ENCODE measurements at regions of chr11 and their contacts with region 1.

Region 1: GRCh38 chr11:44029977-44030911 is 17.5 kb upstream of the ACCSL start:
- DNase-seq: peak; percentile 78
- H3K4me3 ChIP-seq: no peak overlapping the region
- H3K27ac ChIP-seq: peak overlapping the region; percentile 51 to 64 (median 60)
- H3K4me1 ChIP-seq: peaks cover 0 to 27% (median 22%) of the 10 kb centered on the region in 4 donors
- H3K27me3 ChIP-seq: no peaks in the 10 kb centered on the region
- CTCF ChIP-seq: no peak
- EP300 ChIP-seq: peak in 1 of 4 donors; percentile 33
- POLR2A ChIP-seq: no peak

Region 2: DNA sequence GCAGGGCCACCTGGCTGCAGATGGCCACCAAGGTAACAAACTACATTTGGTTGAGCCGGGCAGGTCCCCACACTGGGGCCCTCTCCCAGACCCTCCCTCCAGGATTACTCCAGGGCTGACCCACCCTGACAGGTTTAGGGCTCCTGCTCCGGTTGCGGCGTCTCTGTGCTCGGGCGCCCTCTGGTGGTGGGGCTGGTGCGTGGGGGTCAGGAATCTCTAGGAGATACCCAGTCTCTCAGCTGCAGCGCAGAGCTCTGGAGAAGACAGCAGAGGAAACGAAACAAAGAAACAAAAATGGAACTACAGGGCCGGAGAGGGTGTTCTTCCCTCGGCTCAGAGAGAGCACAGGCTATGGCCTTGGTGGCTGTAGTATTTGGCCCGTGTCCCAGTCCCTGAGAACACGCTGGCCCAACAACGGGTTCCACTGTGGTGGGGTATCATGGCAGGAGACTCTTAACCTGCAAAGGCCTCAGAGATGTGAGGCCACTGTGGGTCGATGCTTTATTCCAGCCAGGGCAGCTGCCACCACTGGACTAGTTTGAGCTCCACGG is 85.4 kb before region 1 on chr11:
- intact Hi-C with region 1: loop called (anchors 5 kb)
- DNase-seq: peak; percentile 86
- H3K4me3 ChIP-seq: peak overlapping the region; percentile 62 to 73 (median 70)
- H3K27ac ChIP-seq: peak overlapping the region; percentile 85 to 91 (median 86)
- H3K4me1 ChIP-seq: peaks cover 0 to 35% (median 25%) of the 10 kb centered on the region in 4 donors
- H3K27me3 ChIP-seq: peaks cover 0 to 63% (median 27%) of the 10 kb centered on the region in 3 donors
- CTCF ChIP-seq: peak in 3 of 4 experiments; percentile 41 to 62 (median 53)
- EP300 ChIP-seq: no peak
- POLR2A ChIP-seq: no peak

Region 3: GRCh38 chr11:43987384-43988039 is 42.7 kb before region 1 on chr11:
- intact Hi-C with region 1: loop called (anchors 5 kb)
- DNase-seq: peak; percentile 96
- H3K4me3 ChIP-seq: peak overlapping the region in 1 of 4 donors; percentile 12
- H3K27ac ChIP-seq: peak overlapping the region; percentile 59 to 74 (median 68)
- H3K4me1 ChIP-seq: peaks cover 0 to 35% (median 31%) of the 10 kb centered on the region in 4 donors
- H3K27me3 ChIP-seq: no peaks in the 10 kb centered on the region
- CTCF ChIP-seq: no peak
- EP300 ChIP-seq: no peak
- POLR2A ChIP-seq: no peak

Region 4: GRCh38 chr11:44192462-44193100 is 162.3 kb after region 1 on chr11:
- intact Hi-C with region 1: no loop called
- DNase-seq: no peak
- H3K4me3 ChIP-seq: no peak overlapping the region
- H3K27ac ChIP-seq: no peak overlapping the region
- H3K4me1 ChIP-seq: no peaks in the 10 kb centered on the region
- H3K27me3 ChIP-seq: no peaks in the 10 kb centered on the region
- CTCF ChIP-seq: no peak
- EP300 ChIP-seq: no peak
- POLR2A ChIP-seq: no peak

Region 5: GRCh38 chr11:44203270-44204043 is 173.2 kb after region 1 on chr11:
- intact Hi-C with region 1: no loop called
- DNase-seq: no peak
- H3K4me3 ChIP-seq: no peak overlapping the region
- H3K27ac ChIP-seq: no peak overlapping the region
- H3K4me1 ChIP-seq: no peaks in the 10 kb centered on the region
- H3K27me3 ChIP-seq: no peaks in the 10 kb centered on the region
- CTCF ChIP-seq: no peak
- EP300 ChIP-seq: no peak
- POLR2A ChIP-seq: no peak